HepG2 (cell line): ENCODE measurements at regions of chr5 and their contacts with region 1.

Region 1: GRCh38 chr5:81838307-81838906 is 87.5 kb upstream of the SSBP2 start:
- DNase-seq: no peak
- ATAC-seq: peak; percentile 81
- H3K4me3 ChIP-seq: no peak overlapping the region
- H3K27ac ChIP-seq: no peak overlapping the region
- H3K4me1 ChIP-seq: no peaks in the 10 kb centered on the region
- H3K27me3 ChIP-seq: no peaks in the 10 kb centered on the region
- CTCF ChIP-seq: peak; percentile 32; the same call in 1 of the 2 replicates
- EP300 ChIP-seq: no peak
- POLR2A ChIP-seq: no peak
- RAD21 ChIP-seq: no peak

Region 2: GRCh38 chr5:81425569-81425968 is 412.8 kb before region 1 on chr5:
- CTCF ChIA-PET with region 1: no interaction called
- POLR2A ChIA-PET with region 1: no interaction called
- in situ Hi-C with region 1: no loop called
- intact Hi-C with region 1: loop called (anchors 10 kb)
- DNase-seq: peak; percentile 32
- ATAC-seq: peak; percentile 53; the same call in 2 of the 3 replicates
- H3K4me3 ChIP-seq: no peak overlapping the region
- H3K27ac ChIP-seq: no peak overlapping the region
- H3K4me1 ChIP-seq: peaks cover 13% of the 10 kb centered on the region; the same call in 1 of the 2 replicates
- H3K27me3 ChIP-seq: no peaks in the 10 kb centered on the region
- CTCF ChIP-seq: peak; percentile 44
- EP300 ChIP-seq: no peak
- POLR2A ChIP-seq: no peak
- RAD21 ChIP-seq: 0 out of 2 replicates have a peak, but pooled peaks have one; percentile 26

Region 3: GRCh38 chr5:81513982-81514381 is 324.4 kb before region 1 on chr5:
- CTCF ChIA-PET with region 1: no interaction called
- POLR2A ChIA-PET with region 1: no interaction called
- in situ Hi-C with region 1: loop called (anchors 25 kb)
- intact Hi-C with region 1: loop called (anchors 2 kb)
- DNase-seq: no peak
- ATAC-seq: no peak
- H3K4me3 ChIP-seq: no peak overlapping the region
- H3K27ac ChIP-seq: no peak overlapping the region
- H3K4me1 ChIP-seq: no peaks in the 10 kb centered on the region
- H3K27me3 ChIP-seq: no peaks in the 10 kb centered on the region
- CTCF ChIP-seq: no peak
- EP300 ChIP-seq: no peak
- POLR2A ChIP-seq: no peak
- RAD21 ChIP-seq: no peak

Region 4: GRCh38 chr5:82044010-82044409 is 205.6 kb after region 1 on chr5:
- CTCF ChIA-PET with region 1: no interaction called
- POLR2A ChIA-PET with region 1: no interaction called
- in situ Hi-C with region 1: no loop called
- intact Hi-C with region 1: no loop called
- DNase-seq: no peak
- ATAC-seq: no peak
- H3K4me3 ChIP-seq: no peak overlapping the region
- H3K27ac ChIP-seq: no peak overlapping the region
- H3K4me1 ChIP-seq: no peaks in the 10 kb centered on the region
- H3K27me3 ChIP-seq: no peaks in the 10 kb centered on the region
- CTCF ChIP-seq: no peak
- EP300 ChIP-seq: no peak
- POLR2A ChIP-seq: no peak
- RAD21 ChIP-seq: no peak